Panc1 (cell line): ENCODE measurements at regions of chr13 and their contacts with region 1.

Region 1: GRCh38 chr13:60944863-60945262 is 470.8 kb downstream of the PCDH20 start:
- DNase-seq: no peak
- ATAC-seq: no peak
- H3K4me3 ChIP-seq: no peak overlapping the region
- H3K27ac ChIP-seq: no peak overlapping the region
- H3K4me1 ChIP-seq: no peaks in the 10 kb centered on the region
- H3K27me3 ChIP-seq: no peaks in the 10 kb centered on the region
- CTCF ChIP-seq: no peak

Region 2: GRCh38 chr13:60379837-60380236 is 565.0 kb before region 1 on chr13:
- CTCF ChIA-PET with region 1: no interaction called
- POLR2A ChIA-PET with region 1: no interaction called
- in situ Hi-C with region 1: no loop called
- intact Hi-C with region 1: no loop called
- DNase-seq: no peak
- ATAC-seq: no peak
- H3K4me3 ChIP-seq: no peak overlapping the region
- H3K27ac ChIP-seq: no peak overlapping the region
- H3K4me1 ChIP-seq: no peaks in the 10 kb centered on the region
- H3K27me3 ChIP-seq: no peaks in the 10 kb centered on the region; the same call in 1 of the 2 replicates
- CTCF ChIP-seq: no peak

Region 3: GRCh38 chr13:60957816-60958215 is 13.0 kb after region 1 on chr13:
- CTCF ChIA-PET with region 1: no interaction called
- POLR2A ChIA-PET with region 1: no interaction called
- in situ Hi-C with region 1: no loop called
- intact Hi-C with region 1: no loop called
- DNase-seq: no peak
- ATAC-seq: no peak
- H3K4me3 ChIP-seq: no peak overlapping the region
- H3K27ac ChIP-seq: no peak overlapping the region
- H3K4me1 ChIP-seq: no peaks in the 10 kb centered on the region
- H3K27me3 ChIP-seq: no peaks in the 10 kb centered on the region
- CTCF ChIP-seq: no peak

Region 4: DNA sequence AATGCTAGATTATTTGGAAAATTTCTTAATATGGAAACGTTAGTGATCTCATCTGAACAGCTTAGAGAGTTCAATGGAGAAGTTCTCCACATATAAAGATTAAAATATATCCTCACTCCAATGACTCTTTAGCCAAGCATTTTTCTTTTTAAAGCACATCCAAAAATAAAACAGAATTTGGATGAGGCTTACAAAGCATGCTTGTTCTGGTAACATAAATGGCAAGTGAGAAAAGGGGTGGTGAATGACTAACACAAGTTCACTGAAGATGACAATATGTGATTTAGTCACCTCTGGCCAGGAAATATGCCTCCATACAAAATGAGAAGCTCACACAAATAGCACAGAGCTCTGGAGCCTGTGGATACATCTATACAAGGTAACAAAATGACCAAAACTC is 217.8 kb after region 1 on chr13:
- CTCF ChIA-PET with region 1: interaction called, 11 read pairs
- POLR2A ChIA-PET with region 1: no interaction called
- in situ Hi-C with region 1: no loop called
- intact Hi-C with region 1: no loop called
- DNase-seq: no peak
- ATAC-seq: no peak
- H3K4me3 ChIP-seq: no peak overlapping the region
- H3K27ac ChIP-seq: no peak overlapping the region
- H3K4me1 ChIP-seq: no peaks in the 10 kb centered on the region
- H3K27me3 ChIP-seq: no peaks in the 10 kb centered on the region
- CTCF ChIP-seq: no peak